Spleen (tissue), 13 donors: ENCODE measurements at regions of chr1 and their contacts with region 1.

Region 1: DNA sequence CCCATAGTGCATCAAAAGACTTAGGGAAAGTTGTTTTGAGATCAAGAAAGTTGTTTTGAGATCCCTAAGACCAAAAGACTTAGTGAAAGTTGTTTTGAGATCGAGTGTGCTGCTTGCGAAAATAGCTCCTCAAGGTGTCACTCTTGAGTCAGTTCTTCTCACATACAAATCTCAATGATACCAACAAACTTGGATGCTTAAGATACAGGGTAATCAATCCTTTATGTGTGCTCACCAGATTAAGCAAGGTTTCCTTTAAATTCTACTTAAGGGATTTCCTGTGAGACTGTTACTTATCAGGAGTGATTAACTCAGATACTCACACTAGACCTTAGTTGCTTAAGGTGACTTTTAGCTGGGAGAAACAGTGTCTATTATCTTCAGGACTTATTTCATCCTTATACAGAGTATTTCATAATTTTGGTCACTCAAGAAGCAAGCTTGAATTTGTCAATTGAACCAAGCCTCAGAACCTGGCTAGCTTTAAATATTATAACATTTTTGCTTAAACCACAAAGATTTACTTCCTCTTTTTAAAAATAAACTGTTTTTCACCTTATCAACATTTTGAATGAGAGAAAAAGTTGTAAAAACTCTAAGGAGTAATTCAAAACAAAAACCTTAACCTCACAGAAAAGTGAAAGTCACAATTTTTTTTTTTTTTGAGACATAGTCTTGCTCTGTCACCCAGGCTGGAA is 8.0 kb upstream of the RLF start:
- DNase-seq: no peak
- H3K4me3 ChIP-seq: peak overlapping the region in 1 of 8 donors; percentile 37
- H3K27ac ChIP-seq: peak overlapping the region in 7 of 8 donors; percentile 49 to 81 (median 70)
- H3K4me1 ChIP-seq: peaks cover 0 to 29% (median 21%) of the 10 kb centered on the region in 6 donors
- H3K27me3 ChIP-seq: no peaks in the 10 kb centered on the region
- CTCF ChIP-seq: peak; percentile 42 to 75 (median 67)
- POLR2A ChIP-seq: no peak

Region 2: GRCh38 chr1:40197656-40198055 is 44.4 kb after region 1 on chr1:
- intact Hi-C with region 1: no loop called
- DNase-seq: no peak
- H3K4me3 ChIP-seq: no peak overlapping the region
- H3K27ac ChIP-seq: no peak overlapping the region
- H3K4me1 ChIP-seq: peaks cover 0 to 11% (median 0%) of the 10 kb centered on the region in 6 donors
- H3K27me3 ChIP-seq: no peaks in the 10 kb centered on the region
- CTCF ChIP-seq: no peak
- POLR2A ChIP-seq: no peak

Region 3: DNA sequence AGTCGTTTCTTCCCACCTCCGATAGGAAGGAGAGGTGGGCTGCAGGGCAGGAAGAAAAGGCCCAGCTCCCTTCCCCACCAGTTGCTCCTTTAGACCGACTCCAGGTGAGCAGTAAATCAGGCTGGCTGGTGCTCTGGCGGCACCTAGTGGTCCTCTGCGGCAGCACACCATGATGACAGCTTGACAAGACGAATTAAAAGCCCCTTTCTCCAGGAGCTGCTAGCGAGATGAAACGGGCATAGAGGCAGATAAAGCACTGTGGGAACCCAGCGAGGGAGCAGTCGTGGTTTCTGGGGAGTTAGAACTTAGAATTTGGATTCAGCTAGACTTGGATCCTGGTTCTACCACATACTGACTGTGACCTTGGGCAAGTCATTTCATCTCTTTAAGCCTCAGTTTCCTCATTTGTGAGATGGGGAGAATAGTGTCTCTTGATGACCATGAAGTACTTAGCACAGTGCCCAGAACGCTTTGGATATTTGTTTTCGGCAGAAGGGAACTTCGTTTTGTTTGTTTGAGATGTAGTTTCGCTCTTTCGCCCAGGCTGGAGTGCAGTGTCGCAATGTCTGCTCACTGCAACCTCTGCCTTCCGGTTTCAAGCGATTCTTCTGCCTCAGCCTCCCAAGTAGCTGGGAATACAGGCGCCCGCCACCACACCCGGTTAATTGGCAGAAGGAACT is 185.7 kb after region 1 on chr1:
- intact Hi-C with region 1: loop called (anchors 5 kb)
- DNase-seq: peak; percentile 95
- H3K4me3 ChIP-seq: peak overlapping the region in 1 of 8 donors; percentile 25
- H3K27ac ChIP-seq: peak overlapping the region in 7 of 8 donors; percentile 37 to 92 (median 77)
- H3K4me1 ChIP-seq: peaks cover 7 to 56% (median 41%) of the 10 kb centered on the region in 6 donors
- H3K27me3 ChIP-seq: no peaks in the 10 kb centered on the region
- CTCF ChIP-seq: peak; percentile 88 to 99 (median 97)
- POLR2A ChIP-seq: no peak

Region 4: DNA sequence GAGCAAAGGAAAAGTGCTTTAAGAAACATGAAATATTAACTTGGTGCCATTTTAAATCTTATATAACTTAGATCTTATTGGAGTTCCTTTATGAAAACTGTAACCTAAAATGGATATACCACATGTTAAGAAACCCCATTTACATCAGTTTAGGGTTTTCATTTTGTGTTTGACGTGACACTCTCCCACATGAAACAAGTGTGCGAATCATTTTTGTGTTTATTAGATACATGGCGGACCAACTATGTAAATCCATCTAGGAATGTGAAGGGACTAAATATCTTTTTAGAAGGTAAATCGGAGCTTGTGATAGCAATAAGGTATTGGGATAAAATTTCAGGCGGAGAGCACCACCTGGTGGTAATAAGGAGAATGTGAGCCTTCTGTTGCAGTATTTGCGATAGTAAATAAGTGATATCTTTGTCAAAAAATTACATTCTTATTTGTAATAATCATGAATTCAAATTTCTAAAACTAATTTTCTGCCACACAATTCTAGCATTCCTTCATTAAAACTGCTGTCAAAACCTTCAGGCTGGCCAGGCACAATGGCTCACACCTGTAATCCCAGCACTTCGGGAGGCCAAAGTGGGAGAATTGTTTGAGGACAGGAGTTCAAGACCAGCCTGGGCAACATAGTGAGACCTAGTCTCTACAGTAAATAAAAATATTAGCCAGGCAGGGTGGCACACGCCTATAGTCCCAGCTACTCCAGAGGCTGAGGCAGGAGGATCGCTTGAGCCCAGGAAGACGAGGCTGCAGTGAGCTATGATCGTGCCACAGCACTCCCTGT is 251.6 kb after region 1 on chr1:
- intact Hi-C with region 1: loop called (anchors 5 kb)
- DNase-seq: no peak
- H3K4me3 ChIP-seq: peak overlapping the region in 1 of 8 donors; percentile 32
- H3K27ac ChIP-seq: peak overlapping the region; percentile 37 to 100 (median 83)
- H3K4me1 ChIP-seq: peaks cover 28 to 91% (median 61%) of the 10 kb centered on the region in 6 donors
- H3K27me3 ChIP-seq: no peaks in the 10 kb centered on the region
- CTCF ChIP-seq: peak; percentile 72 to 91 (median 89)
- POLR2A ChIP-seq: no peak